H1 (cell line): ENCODE measurements at regions of chr3 and their contacts with region 1.

Region 1: GRCh38 chr3:37214076-37214475 is 39.7 kb upstream of the LRRFIP2 start:
- DNase-seq: peak in 1 of 2 experiments; percentile 60
- H3K4me3 ChIP-seq: no peak overlapping the region
- H3K27ac ChIP-seq: no peak overlapping the region
- H3K4me1 ChIP-seq: no peaks in the 10 kb centered on the region
- H3K27me3 ChIP-seq: no peaks in the 10 kb centered on the region
- CTCF ChIP-seq: no peak
- EP300 ChIP-seq: no peak
- POLR2A ChIP-seq: no peak
- RAD21 ChIP-seq: no peak

Region 2: DNA sequence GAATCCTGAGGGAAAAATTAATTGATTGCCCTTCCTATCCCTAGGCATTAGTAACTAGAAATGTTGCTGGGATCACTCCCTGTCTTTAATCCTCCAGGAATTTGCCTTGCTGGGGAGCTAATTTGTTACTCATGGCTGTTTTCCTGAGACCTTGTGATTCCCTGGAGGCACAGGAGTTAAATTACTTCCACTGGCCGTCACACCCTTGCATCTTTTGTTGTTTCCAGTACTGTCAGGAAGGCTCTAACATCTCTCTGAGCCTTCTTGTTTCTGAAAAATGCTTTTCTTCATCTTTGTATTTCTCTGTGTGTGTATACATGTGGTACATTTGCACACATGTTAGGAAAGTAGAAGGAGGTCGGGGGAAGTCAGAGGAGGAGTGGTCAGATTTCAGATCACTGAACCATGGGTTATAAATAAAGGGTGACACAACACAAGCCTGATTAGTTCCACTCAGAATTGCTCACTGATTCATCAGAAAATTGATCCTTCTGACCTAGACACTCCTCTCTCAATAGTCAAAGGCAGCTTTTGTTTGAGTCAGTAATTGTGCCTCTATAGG is 16.2 kb before region 1 on chr3:
- CTCF ChIA-PET with region 1: interaction called, 29 read pairs
- POLR2A ChIA-PET with region 1: no interaction called
- DNase-seq: no peak
- H3K4me3 ChIP-seq: no peak overlapping the region
- H3K27ac ChIP-seq: no peak overlapping the region
- H3K4me1 ChIP-seq: no peaks in the 10 kb centered on the region
- H3K27me3 ChIP-seq: no peaks in the 10 kb centered on the region
- CTCF ChIP-seq: no peak
- EP300 ChIP-seq: no peak
- POLR2A ChIP-seq: no peak
- RAD21 ChIP-seq: no peak

Region 3: GRCh38 chr3:37227870-37228549 is 13.9 kb after region 1 on chr3:
- CTCF ChIA-PET with region 1: interaction called, 20 read pairs
- POLR2A ChIA-PET with region 1: no interaction called
- DNase-seq: no peak
- H3K4me3 ChIP-seq: no peak overlapping the region
- H3K27ac ChIP-seq: no peak overlapping the region
- H3K4me1 ChIP-seq: no peaks in the 10 kb centered on the region
- H3K27me3 ChIP-seq: no peaks in the 10 kb centered on the region; a peak in 1 of 7 replicates
- CTCF ChIP-seq: no peak
- EP300 ChIP-seq: no peak
- POLR2A ChIP-seq: no peak
- RAD21 ChIP-seq: no peak